AG04450 (cell line): ENCODE measurements at regions of chr16 and their contacts with region 1.

Region 1: DNA sequence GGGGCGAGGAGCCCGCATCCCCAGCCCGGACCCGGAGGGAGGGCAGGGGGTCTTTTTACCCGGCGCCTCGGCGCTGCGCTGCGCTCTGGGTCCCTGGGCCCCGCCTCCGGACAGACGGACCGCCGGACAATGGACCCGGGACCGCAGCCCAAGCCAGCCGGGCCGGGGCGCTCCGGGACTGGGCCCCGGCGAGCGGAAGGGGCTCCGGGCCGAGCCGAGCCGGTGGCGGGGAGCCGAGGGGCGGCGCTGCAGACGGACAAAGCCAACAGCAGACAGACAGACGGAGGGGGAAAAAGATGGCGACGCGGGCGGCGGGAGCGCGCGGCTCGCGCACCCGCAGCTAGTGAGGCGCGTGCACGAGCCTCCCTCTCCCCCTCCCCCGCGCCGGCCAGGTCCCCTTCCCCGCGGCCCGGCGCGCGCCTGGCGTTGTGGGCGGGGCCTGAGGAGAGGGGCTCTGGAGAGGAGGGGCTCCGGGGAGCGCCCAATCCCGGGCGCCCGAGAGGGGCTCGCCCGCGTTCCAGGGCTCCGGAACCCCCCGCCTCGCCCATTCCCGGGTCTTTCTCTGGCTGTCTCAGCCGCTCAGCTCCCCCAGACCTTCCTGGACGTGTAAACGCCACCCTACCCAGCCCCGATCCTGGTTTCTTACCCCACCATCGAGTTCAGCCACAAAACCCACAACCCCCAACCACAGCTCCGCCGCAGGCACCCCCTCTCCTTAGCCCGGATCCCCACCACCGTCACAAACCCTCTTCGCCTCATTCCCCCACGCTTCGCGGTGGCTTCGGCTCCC is at the start of gene ZNF821:
- DNase-seq: no peak
- H3K4me3 ChIP-seq: peak within 1 kb of the TSS; percentile 77
- H3K27ac ChIP-seq: peak within 1 kb of the TSS; percentile 59
- H3K27me3 ChIP-seq: no peaks in the 10 kb centered on the region
- CTCF ChIP-seq: no peak; the same call in 1 of the 2 replicates
- polyA plus RNA-seq, gene ZNF821: 6.3 and 6.5 TPM in 2 replicates

Region 2: GRCh38 chr16:71789136-71789535 is 94.9 kb before region 1 on chr16:
- CTCF ChIA-PET with region 1: interaction called, 10 read pairs
- POLR2A ChIA-PET with region 1: interaction called, 5 read pairs
- DNase-seq: no peak
- H3K4me3 ChIP-seq: no peak overlapping the region
- H3K27ac ChIP-seq: no peak overlapping the region
- H3K27me3 ChIP-seq: no peaks in the 10 kb centered on the region
- CTCF ChIP-seq: no peak

Region 3: GRCh38 chr16:71853413-71853812 is 30.6 kb before region 1 on chr16:
- CTCF ChIA-PET with region 1: interaction called, 24 read pairs
- POLR2A ChIA-PET with region 1: no interaction called
- DNase-seq: no peak
- H3K4me3 ChIP-seq: no peak overlapping the region
- H3K27ac ChIP-seq: no peak overlapping the region
- H3K27me3 ChIP-seq: no peaks in the 10 kb centered on the region
- CTCF ChIP-seq: no peak

Region 4: GRCh38 chr16:71867939-71868338 is 16.1 kb before region 1 on chr16:
- CTCF ChIA-PET with region 1: interaction called, 43 read pairs
- POLR2A ChIA-PET with region 1: no interaction called
- DNase-seq: no peak
- H3K4me3 ChIP-seq: no peak overlapping the region
- H3K27ac ChIP-seq: no peak overlapping the region
- H3K27me3 ChIP-seq: no peaks in the 10 kb centered on the region
- CTCF ChIP-seq: no peak

Region 5: DNA sequence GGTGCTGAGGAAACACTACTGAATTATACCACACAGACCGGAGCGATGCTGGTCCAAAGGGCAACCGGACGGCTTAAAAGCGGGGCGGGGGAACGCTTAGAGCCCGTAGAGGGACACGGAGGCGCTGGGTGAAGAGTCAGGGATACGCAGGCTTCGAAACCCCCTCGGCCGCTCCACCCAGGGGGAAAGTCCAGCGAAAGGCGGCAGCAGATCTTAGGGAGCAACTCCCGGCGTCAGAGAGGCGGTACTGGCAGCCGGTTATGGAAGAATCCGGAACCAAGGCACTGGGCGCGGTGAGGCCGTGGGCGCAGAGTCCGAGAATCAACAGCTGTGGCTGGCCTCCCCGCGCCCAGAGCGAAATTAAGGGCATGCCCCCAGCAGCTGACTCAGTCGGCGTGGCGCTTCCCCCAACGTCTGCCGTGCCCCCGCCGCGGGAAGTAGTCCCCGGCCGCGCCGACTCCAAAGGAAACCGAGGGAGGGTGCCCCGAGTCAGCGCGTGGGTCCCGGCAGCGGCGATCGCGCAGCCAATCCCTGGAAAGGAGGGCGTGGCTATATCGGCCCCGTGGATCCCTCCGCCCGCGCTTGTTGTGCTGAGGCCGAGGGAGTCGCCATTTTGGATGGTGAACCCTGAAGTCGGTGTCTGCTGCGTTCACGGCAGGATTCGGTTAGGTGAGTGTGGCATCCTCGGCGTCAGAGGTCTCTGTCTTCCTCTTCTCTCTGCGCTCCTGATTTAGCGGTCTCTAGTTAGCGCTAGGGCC is 11.1 kb after region 1 on chr16 and contains the start of gene IST1:
- CTCF ChIA-PET with region 1: interaction called, 43 read pairs
- POLR2A ChIA-PET with region 1: interaction called, 18 read pairs
- DNase-seq: peak; percentile 98
- H3K4me3 ChIP-seq: peak within 1 kb of the TSS; percentile 91
- H3K27ac ChIP-seq: peak within 1 kb of the TSS; percentile 98
- H3K27me3 ChIP-seq: no peaks in the 10 kb centered on the region
- CTCF ChIP-seq: no peak
- polyA plus RNA-seq, gene IST1: 225 and 260 TPM in 2 replicates

Region 6: DNA sequence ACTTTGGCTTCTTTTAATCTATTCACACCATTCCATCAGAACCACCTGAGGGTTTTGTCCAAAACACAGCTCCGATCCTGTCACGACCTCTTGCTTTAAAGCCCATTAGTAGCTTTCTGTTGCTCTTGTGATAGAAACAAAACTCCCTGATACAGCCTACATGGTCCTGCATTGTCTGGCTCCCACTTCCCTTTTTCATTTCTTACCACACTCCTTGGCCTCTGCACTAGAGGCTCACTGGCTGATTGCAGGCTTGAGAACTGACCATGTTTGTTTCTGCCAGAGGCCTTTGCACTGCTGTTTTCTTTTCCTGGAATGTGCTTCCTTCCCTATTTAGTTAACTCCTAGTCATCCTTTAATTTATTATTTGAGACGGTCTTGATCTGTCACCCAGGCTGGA is 35.0 kb after region 1 on chr16:
- CTCF ChIA-PET with region 1: interaction called, 32 read pairs
- POLR2A ChIA-PET with region 1: no interaction called
- DNase-seq: no peak
- H3K4me3 ChIP-seq: no peak overlapping the region
- H3K27ac ChIP-seq: no peak overlapping the region
- H3K27me3 ChIP-seq: no peaks in the 10 kb centered on the region
- CTCF ChIP-seq: no peak

Region 7: DNA sequence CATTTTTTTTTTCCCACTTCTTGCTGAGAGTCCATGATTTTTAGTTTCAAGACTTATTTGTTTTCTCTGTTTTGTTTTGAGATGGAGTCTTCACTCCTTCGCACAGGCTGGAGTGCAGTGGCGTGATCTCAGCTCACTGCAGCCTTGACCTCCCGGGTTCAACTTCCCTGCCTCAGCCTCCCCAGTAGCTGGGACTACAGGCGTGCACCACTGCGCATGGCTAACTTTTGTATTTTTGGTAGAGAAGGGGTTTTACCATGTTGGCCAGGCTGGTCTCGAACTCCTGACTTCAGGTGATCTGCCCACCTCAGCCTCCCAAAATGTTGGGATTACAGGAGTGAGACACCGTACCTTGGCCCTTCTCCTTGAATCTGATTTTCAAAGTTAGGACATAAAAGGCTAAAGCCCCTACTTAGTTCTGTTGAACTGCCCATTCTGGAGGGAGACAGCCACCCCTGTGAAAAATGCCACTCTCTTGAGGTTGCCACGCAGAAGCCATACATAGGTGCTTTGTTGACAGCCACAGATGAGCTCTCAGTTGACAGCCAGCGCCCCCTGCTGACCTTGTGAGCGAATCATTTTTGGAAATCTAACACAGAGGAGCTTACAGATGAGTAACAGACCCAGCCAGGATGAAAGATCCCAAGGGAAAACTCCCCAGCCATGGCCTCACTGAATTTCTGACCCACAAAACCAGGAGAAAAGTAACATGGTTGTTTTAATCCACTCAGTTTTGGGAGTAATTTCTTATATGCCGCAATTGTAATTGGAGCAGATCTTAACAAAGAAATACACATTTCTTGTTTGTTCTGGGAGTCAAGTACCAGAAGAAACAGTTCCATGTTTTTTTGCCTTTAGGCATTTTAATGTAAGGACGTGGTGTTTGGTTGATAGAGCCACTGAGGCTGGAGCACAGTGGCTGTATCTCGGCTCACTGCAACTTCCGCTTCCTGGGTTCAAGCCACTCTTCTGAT is 77.3 kb after region 1 on chr16:
- CTCF ChIA-PET with region 1: interaction called, 57 read pairs
- POLR2A ChIA-PET with region 1: no interaction called
- DNase-seq: peak; percentile 56
- H3K4me3 ChIP-seq: no peak overlapping the region
- H3K27ac ChIP-seq: no peak overlapping the region
- H3K27me3 ChIP-seq: peaks cover 2% of the 10 kb centered on the region
- CTCF ChIP-seq: peak; percentile 90